Right ventricle myocardium inferior (tissue), 1 donor: ENCODE measurements at regions of chr4 and their contacts with region 1.

Region 1: DNA sequence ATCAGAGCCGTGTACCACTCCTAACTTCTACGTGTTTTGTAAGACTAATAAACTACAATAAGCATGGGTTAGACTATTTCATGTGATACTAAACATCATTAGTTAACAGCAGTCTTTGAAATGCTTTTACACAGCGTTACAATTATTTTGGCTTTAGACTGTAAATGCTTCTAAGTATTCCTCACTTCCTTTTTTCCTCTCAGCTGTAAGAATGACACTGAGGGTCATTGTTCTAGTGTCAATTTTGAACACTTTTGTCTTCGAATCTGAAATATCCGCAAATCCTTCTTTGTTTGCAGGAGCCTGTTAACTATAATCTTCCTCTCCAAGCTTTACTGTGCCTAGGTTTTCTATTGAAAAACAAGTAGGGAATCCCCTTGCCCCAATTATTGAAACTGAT is 1.5 kb downstream of the ABCE1 start:
- DNase-seq: no peak
- ATAC-seq: no peak

Region 2: DNA sequence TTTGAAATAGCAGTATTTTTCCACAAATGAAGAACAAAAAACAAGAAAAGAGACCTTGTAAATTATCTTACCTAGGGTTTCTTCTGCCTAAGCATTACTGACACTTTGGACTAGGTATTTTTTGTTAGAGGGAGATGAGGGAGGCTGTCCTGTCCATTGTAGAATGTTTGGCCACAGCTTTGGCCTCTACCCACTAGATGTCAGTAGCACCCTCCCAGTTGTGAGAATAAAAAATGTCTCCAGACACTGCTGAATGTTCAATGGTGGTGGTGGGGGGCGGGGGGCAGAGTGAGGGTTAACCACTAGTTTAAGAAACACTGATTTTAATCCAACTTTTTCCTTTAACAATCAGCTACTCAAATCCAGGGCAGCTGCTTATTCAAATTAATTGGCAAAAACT is 54.9 kb after region 1 on chr4:
- intact Hi-C with region 1: loop called (anchors 10 kb)
- DNase-seq: no peak
- ATAC-seq: peak; percentile 80